Posterior cingulate gyrus (tissue), 11 donors: ENCODE measurements at regions of chr7 and their contacts with region 1.

Region 1: GRCh38 chr7:74289018-74289658 is at the start of gene CLIP2:
- DNase-seq: peak; percentile 70 to 97 (median 85)

Region 2: GRCh38 chr7:74254129-74254857 is 34.8 kb before region 1 on chr7 and contains the start of gene RFC2:
- intact Hi-C with region 1: loop called (anchors 5 kb)
- DNase-seq: peak; percentile 95 to 100 (median 97)

Region 3: GRCh38 chr7:74269757-74270277 is 19.3 kb before region 1 on chr7:
- intact Hi-C with region 1: loop called (anchors 1 kb)
- DNase-seq: peak in 9 of 10 donors; percentile 42 to 93 (median 57)

Region 4: DNA sequence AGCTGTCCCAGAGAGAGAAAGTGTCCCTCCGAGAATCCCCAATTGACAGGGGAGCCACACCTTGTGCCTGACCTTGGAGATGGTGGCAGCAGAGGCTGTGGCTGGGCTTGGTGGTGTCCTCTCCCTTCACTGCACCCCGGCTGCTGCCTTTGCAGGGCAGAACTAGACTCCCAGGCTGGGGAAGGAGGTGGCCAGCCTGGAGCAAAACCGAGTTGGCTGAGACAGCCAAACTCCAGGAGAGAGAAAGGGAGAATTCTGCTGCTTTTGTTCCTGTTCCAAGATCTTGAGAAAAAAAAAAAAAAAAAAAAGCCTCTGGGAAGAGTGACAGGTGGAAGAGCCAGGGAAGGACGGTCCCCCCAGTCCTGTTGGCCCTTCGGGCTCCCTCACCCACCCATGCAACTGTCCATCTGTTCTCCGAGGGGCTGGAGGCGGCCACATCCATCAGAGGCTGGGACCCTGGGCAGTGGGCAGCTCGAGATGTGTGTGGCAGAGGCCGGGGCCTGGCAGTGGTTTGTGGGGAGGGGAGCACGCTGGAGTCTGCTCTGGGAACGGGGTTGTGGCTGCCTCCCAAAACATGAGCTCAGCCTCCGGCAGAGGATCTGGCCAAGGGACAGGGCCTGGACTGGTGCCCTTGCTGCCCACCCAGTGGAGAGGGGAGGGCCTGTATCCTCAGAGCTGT is 35.5 kb after region 1 on chr7:
- intact Hi-C with region 1: no loop called
- DNase-seq: peak; percentile 60 to 94 (median 68)

Region 5: GRCh38 chr7:74371381-74372341 is 82.5 kb after region 1 on chr7:
- intact Hi-C with region 1: loop called (anchors 5 kb)
- DNase-seq: peak in 7 of 10 donors; percentile 30 to 94 (median 64)